ENCODE measurements at regions of chr11 and their contacts with region 1.

Region 1: DNA sequence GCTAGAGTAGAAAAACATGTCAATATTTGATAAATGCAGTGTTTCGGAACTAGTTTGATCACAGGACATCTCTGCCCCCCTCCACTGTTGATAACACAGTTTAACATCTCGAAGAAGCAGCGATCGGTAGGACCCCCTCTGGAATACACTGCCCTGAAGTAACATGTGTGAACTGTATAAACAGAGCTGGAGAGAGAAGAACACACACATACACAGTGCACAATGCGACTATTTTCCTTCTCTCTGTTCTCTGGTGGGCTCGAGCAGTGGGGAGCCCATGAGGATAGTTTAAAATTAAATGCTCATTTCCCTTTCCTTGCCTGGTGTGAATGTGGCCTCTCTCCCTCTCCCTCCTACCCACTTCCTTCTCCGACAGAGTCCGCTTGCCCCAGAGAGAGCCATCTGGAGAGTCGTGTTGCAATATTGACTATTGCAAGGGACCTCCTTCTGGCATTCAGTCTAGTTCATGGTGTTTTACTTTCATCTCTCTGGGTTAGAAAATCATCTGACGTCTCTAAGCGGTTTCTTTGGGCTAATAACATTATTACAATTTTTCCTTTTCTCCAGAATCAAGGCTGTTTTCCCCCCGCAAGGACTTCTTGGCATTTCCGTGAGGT is 51.6 kb upstream of the BARX2 start:
- ATAC-seq: peak in 7 of 8 experiments; percentile 23 to 79 (median 68)
- H3K4me3 ChIP-seq: no peak overlapping the region
- H3K27ac ChIP-seq: no peak overlapping the region
- H3K4me1 ChIP-seq: peaks cover 11 to 14% of the 10 kb centered on the region in 2 donors

Region 2: DNA sequence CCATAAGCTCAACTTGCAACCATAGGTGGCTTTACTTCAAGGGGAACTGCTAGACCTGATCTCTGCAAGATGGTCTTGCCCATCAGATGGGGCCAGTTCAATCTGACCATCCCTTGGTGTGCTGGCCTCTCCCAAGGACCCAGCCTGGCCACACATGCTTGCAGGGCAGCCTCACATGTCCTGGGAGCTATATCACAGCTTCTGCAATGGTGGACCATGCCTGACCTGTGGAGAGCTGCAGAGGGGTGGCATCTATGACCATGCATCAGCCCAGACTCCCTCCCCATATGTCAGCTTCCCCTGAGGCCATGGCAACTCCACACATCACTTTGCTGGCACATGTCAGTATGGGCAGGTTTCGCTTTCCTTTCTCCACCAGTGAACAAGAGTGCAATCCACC is 223.8 kb before region 1 on chr11:
- in situ Hi-C with region 1: loop called in 6 of 9 experiments (anchors 10 to 25 kb)
- ATAC-seq: no peak
- H3K4me3 ChIP-seq: no peak overlapping the region
- H3K27ac ChIP-seq: no peak overlapping the region
- H3K4me1 ChIP-seq: no peaks in the 10 kb centered on the region

Region 3: DNA sequence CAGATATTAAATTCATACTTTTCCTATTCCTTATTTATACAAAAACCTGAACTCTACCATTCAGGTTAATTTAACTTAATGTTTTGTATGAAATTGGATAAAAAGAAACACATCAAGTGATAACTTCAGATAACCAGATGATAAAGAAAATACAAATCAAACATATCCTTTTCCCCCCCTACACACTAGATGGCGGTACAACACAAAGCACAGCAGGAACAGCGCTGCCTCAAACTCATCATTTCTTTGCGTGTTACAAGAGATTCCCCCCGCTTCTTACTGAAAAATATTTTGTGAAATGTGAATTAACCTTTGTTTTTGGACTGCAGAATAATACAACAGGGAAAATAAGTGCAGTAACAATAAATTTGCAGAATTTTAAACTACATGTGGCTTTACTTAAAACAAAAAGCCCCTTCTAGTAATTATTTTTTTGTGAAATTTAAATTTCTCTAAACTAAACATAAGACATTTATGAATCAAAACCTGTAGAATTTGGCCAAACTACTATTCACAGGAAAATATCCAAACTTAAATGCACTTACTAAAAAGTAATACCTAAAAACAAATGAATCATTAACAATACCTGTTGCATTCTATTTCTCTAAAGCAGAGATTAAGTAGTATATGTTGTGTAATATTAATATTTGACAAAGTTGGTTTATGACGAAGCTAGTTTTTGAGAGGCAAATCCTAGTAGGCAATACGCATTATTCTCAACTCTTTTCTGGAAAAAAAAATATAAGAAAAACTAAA is 206.2 kb before region 1 on chr11:
- in situ Hi-C with region 1: loop called in 7 of 9 experiments (anchors 10 to 25 kb)
- ATAC-seq: peak in 4 of 8 experiments; percentile 22 to 55 (median 42)
- H3K4me3 ChIP-seq: no peak overlapping the region
- H3K27ac ChIP-seq: no peak overlapping the region
- H3K4me1 ChIP-seq: no peaks in the 10 kb centered on the region

Region 4: GRCh38 chr11:129375751-129376657 is 52.0 kb after region 1 on chr11 and contains the start of gene BARX2:
- in situ Hi-C with region 1: no loop called
- ATAC-seq: peak; percentile 84 to 92 (median 88)
- H3K4me3 ChIP-seq: peak within 1 kb of the TSS; percentile 20 to 38 (median 34)
- H3K27ac ChIP-seq: no peak within 1 kb of the TSS
- H3K4me1 ChIP-seq: peaks cover 3 to 12% of the 10 kb centered on the region in 2 donors
- total RNA-seq, gene BARX2: 0.09 to 0.71 (median 0.40) TPM in 6 of 8 experiments, not detected in the others